ENCODE measurements at regions of chr21 and their contacts with region 1.

Region 1: GRCh38 chr21:44792702-44793591 is 8.7 kb downstream of the UBE2G2 start:
- DNase-seq: peak in 1 of 2 donors; percentile 30
- ATAC-seq: peak; percentile 84 to 85
- H3K4me3 ChIP-seq: no peak overlapping the region
- H3K27ac ChIP-seq: no peak overlapping the region
- H3K4me1 ChIP-seq: peaks cover 13 to 35% of the 10 kb centered on the region in 2 donors
- H3K27me3 ChIP-seq: no peaks in the 10 kb centered on the region
- CTCF ChIP-seq: peak; percentile 48 to 81 (median 65)
- POLR2A ChIP-seq: no peak

Region 2: DNA sequence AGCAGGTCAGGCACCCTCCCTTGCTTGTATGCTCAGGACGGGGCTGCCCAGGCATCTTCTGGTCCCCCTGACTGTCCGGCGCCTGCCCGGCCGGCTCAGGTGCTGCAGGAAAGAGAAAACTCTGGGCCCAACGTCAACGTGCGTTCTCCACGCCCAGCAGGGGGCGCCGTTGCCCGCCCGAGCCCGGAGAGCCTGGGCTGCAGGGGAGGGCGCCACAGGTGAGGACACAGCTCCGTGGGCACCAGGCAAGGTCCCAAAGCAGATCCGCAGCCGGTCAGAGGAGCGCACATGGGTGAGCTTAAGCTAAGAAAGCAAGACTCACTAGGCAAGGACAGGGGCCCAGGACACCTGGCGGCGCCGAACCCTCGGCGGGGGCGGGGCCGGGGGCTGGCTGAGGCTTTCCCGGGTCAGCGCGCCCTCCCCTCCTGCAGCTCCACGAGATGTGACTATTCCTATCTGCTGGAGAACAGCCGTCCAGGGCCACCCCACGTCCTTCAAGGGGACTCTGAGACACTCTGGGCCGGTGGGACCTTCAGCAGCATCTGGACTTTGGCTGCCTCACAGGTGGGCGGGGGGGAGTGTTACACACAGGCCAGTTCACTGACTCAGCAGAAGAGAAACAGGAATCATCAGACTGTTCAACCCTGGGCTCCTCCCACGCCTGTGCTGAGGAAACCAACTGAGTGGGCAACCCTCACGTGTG is 282.3 kb before region 1 on chr21:
- in situ Hi-C with region 1: loop called in 1 of 4 experiments (anchors 25 kb)
- intact Hi-C with region 1: loop called (anchors 2 kb)
- DNase-seq: no peak
- ATAC-seq: peak in 1 of 2 donors; percentile 46
- H3K4me3 ChIP-seq: no peak overlapping the region
- H3K27ac ChIP-seq: no peak overlapping the region
- H3K4me1 ChIP-seq: no peaks in the 10 kb centered on the region
- H3K27me3 ChIP-seq: peaks cover 20 to 37% (median 33%) of the 10 kb centered on the region in 3 donors
- CTCF ChIP-seq: peak; percentile 23 to 58 (median 50)
- POLR2A ChIP-seq: no peak

Region 3: GRCh38 chr21:44880762-44881585 is 88.0 kb after region 1 on chr21:
- in situ Hi-C with region 1: loop called in 2 of 4 experiments (anchors 5 to 10 kb)
- intact Hi-C with region 1: no loop called
- DNase-seq: no peak
- ATAC-seq: no peak
- H3K4me3 ChIP-seq: no peak overlapping the region
- H3K27ac ChIP-seq: no peak overlapping the region
- H3K4me1 ChIP-seq: peaks cover 1 to 2% of the 10 kb centered on the region in 2 donors
- H3K27me3 ChIP-seq: no peaks in the 10 kb centered on the region
- CTCF ChIP-seq: no peak
- POLR2A ChIP-seq: no peak

Region 4: GRCh38 chr21:44939532-44940115 is 146.7 kb after region 1 on chr21 and contains the start of gene SLX9:
- in situ Hi-C with region 1: loop called in 1 of 4 experiments (anchors 10 kb)
- intact Hi-C with region 1: no loop called
- DNase-seq: peak; percentile 61 to 69
- ATAC-seq: peak; percentile 87 to 90
- H3K4me3 ChIP-seq: peak within 1 kb of the TSS; percentile 71 to 95 (median 83)
- H3K27ac ChIP-seq: peak within 1 kb of the TSS; percentile 78 to 91 (median 84)
- H3K4me1 ChIP-seq: peaks cover 26 to 29% of the 10 kb centered on the region in 2 donors
- H3K27me3 ChIP-seq: no peaks in the 10 kb centered on the region
- CTCF ChIP-seq: no peak
- POLR2A ChIP-seq: peak; percentile 63 to 76
- total RNA-seq, gene SLX9: 23.7 to 37.6 (median 25.8) TPM

Region 5: GRCh38 chr21:45050786-45051489 is 258.0 kb after region 1 on chr21:
- in situ Hi-C with region 1: no loop called
- intact Hi-C with region 1: no loop called
- DNase-seq: peak in 1 of 2 donors; percentile 84
- ATAC-seq: peak; percentile 28 to 49
- H3K4me3 ChIP-seq: peak overlapping the region in 1 of 4 donors; percentile 3
- H3K27ac ChIP-seq: peak overlapping the region; percentile 85 to 93 (median 92)
- H3K4me1 ChIP-seq: peaks cover 36 to 47% of the 10 kb centered on the region in 2 donors
- H3K27me3 ChIP-seq: no peaks in the 10 kb centered on the region
- CTCF ChIP-seq: no peak
- POLR2A ChIP-seq: no peak